ENCODE measurements at regions of chr2 and their contacts with region 1.

Region 1: GRCh38 chr2:239401067-239401880 is 454 bp upstream of the HDAC4 start:
- DNase-seq: peak; percentile 97
- H3K4me3 ChIP-seq: peak overlapping the region; percentile 72 to 99 (median 88)
- H3K27ac ChIP-seq: peak overlapping the region; percentile 99
- H3K4me1 ChIP-seq: peaks cover 14% of the 10 kb centered on the region
- H3K27me3 ChIP-seq: peaks cover 3% of the 10 kb centered on the region
- CTCF ChIP-seq: no peak

Region 2: DNA sequence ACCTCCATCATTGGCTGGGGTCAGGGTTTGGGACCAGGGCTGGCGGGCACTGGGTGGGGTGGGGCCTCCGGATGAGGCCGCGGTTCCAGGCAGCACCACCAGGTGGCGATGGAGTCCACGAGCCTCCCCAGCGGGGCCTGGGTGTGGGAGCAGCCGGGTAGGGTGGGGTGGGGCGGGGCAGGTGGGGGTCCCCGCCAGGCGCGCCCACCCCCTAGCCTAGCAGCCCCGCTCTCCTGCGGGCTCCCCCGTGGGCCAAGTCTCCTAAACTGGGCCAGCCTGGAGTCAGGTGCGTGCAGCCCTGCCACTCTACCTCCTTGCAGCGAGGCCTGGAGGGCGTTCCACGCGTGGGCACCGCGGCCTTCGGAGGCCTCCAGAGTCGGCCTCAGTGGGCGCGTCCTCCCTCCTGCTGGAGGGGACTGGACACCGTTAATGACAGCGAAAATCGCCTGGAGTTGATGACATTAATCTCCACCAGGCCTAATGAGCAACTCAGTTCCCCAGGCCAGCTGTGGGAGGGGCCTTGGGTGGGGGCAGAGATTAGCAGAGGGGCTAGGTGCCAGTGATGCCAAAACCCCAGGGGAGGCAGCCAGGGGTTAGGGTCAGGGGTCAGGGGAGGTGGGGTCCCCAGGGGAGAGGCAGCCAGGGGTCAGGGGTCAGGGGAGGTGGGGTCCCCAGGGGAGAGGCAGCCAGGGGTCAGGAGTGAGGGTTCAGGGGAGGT is 365.8 kb before region 1 on chr2:
- CTCF ChIA-PET with region 1: no interaction called
- dilution Hi-C with region 1: no loop called
- in situ Hi-C with region 1: no loop called
- intact Hi-C with region 1: loop called (anchors 10 kb)
- DNase-seq: no peak
- H3K4me3 ChIP-seq: no peak overlapping the region
- H3K27ac ChIP-seq: no peak overlapping the region
- H3K4me1 ChIP-seq: no peaks in the 10 kb centered on the region
- H3K27me3 ChIP-seq: peaks cover 9% of the 10 kb centered on the region
- CTCF ChIP-seq: peak; percentile 37 to 89

Region 3: DNA sequence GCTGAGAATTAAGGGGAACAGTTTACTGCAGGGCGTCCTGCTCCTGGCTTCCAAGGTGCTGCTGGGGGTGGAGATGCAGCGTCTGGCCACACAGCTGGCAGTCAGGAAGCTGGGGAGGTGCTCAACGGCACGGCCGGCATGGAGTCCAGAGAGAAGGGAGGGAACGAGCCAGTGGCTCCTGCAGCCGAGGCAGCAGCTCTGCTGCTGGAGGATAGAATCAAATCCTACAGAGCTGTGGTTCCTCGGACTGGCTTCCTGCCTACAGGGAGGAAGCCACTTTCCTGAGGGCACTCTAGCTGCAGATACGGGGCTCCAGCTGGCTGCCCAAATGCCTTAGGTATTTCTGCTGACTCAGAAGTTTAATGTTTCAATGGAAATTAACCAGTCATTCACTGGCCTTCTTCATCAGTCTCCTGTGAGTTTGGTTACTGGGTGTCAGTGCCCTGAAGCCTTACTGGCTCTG is 287.1 kb before region 1 on chr2:
- CTCF ChIA-PET with region 1: no interaction called
- dilution Hi-C with region 1: no loop called
- in situ Hi-C with region 1: no loop called
- intact Hi-C with region 1: loop called (anchors 10 kb)
- DNase-seq: no peak
- H3K4me3 ChIP-seq: no peak overlapping the region
- H3K27ac ChIP-seq: no peak overlapping the region
- H3K4me1 ChIP-seq: peaks cover 15% of the 10 kb centered on the region
- H3K27me3 ChIP-seq: no peaks in the 10 kb centered on the region
- CTCF ChIP-seq: no peak

Region 4: DNA sequence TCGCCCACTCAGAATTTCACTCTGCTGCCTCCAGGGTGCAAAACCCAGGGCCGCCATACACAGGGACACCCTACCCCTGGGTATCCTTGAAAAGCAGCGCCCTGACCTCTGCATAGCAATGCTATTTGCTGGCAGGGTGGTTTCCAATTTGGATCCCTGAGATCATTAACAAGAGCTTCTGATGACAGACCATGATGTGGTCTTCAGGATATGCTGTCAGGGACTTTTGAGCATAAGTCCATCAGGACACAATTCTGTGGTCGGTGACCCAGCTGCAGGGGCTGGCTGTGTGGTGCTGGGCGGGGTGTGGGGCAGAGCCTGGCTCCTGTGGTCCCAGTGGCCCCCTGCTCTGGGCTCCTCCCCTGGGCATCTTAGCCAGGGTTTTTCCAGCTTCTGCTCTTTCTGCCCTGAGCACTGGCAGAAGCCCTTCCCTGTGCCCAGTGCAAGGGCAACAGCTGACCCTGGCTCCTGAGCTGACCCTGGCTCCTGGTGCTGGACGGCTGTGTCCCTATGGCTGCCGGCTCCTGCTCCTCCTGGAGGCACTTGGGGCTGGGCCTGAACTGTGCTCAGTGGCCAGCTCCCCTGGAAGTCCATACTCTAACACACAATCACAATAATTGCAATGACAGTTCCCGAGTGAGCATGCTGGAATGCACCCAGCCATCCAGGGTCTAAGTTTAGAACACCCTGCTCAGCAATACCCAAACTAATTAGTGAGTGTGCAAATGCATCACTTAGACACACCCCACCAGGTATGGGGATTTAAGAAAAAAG is 271.9 kb before region 1 on chr2:
- CTCF ChIA-PET with region 1: no interaction called
- dilution Hi-C with region 1: no loop called
- in situ Hi-C with region 1: no loop called
- intact Hi-C with region 1: no loop called
- DNase-seq: no peak
- H3K4me3 ChIP-seq: no peak overlapping the region
- H3K27ac ChIP-seq: no peak overlapping the region
- H3K4me1 ChIP-seq: no peaks in the 10 kb centered on the region
- H3K27me3 ChIP-seq: no peaks in the 10 kb centered on the region
- CTCF ChIP-seq: no peak

Region 5: GRCh38 chr2:239199041-239199768 is 202.1 kb before region 1 on chr2:
- CTCF ChIA-PET with region 1: no interaction called
- dilution Hi-C with region 1: no loop called
- in situ Hi-C with region 1: no loop called
- intact Hi-C with region 1: no loop called
- DNase-seq: no peak
- H3K4me3 ChIP-seq: no peak overlapping the region
- H3K27ac ChIP-seq: no peak overlapping the region
- H3K4me1 ChIP-seq: no peaks in the 10 kb centered on the region
- H3K27me3 ChIP-seq: no peaks in the 10 kb centered on the region
- CTCF ChIP-seq: no peak

Region 6: DNA sequence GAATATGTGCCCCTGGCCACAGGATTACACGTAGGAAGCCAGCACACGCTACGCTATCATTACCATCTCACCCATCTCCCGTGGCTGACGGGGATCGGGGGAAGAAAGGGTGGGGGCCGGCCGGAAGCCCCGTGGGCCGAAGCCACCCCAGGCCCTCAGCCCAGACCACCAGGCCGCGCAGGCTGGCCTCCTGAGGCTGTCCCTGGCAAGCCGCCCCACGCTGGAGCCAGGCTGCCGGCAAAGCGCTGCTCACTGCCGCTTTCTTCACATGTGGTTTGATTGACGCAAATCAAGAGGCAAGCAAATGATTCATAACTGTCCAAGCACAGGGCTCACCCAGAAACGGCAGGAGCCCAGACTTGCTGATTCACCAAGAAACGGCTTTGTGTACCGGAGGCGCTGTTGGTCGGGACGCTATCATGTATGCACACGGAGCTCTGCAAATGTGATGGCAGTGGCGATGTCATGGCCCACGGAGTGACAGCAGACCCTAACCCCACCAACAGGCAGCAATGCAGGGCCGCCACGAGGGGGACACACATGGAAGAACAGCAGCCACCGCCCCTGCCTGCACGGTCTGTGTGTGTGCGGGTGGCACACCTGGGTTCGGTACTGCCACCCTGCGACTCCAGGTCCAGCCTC is 126.1 kb before region 1 on chr2:
- CTCF ChIA-PET with region 1: no interaction called
- dilution Hi-C with region 1: no loop called
- in situ Hi-C with region 1: no loop called
- intact Hi-C with region 1: loop called (anchors 5 kb)
- DNase-seq: peak; percentile 94
- H3K4me3 ChIP-seq: peak overlapping the region in 2 of 3 experiments; percentile 8 to 29
- H3K27ac ChIP-seq: peak overlapping the region; percentile 32
- H3K4me1 ChIP-seq: peaks cover 26% of the 10 kb centered on the region
- H3K27me3 ChIP-seq: no peaks in the 10 kb centered on the region
- CTCF ChIP-seq: no peak

Region 7: GRCh38 chr2:239348563-239349447 is 52.5 kb before region 1 on chr2:
- CTCF ChIA-PET with region 1: no interaction called
- dilution Hi-C with region 1: no loop called
- in situ Hi-C with region 1: no loop called
- intact Hi-C with region 1: no loop called
- DNase-seq: peak; percentile 19
- H3K4me3 ChIP-seq: no peak overlapping the region
- H3K27ac ChIP-seq: peak overlapping the region; percentile 61
- H3K4me1 ChIP-seq: peaks cover 39% of the 10 kb centered on the region
- H3K27me3 ChIP-seq: no peaks in the 10 kb centered on the region
- CTCF ChIP-seq: no peak

Region 8: GRCh38 chr2:239675826-239676715 is 274.8 kb after region 1 on chr2:
- CTCF ChIA-PET with region 1: no interaction called
- dilution Hi-C with region 1: no loop called
- in situ Hi-C with region 1: no loop called
- intact Hi-C with region 1: no loop called
- DNase-seq: no peak
- H3K4me3 ChIP-seq: no peak overlapping the region
- H3K27ac ChIP-seq: no peak overlapping the region
- H3K4me1 ChIP-seq: no peaks in the 10 kb centered on the region
- H3K27me3 ChIP-seq: no peaks in the 10 kb centered on the region
- CTCF ChIP-seq: no peak

Region 9: GRCh38 chr2:239991689-239992314 is 590.5 kb after region 1 on chr2:
- CTCF ChIA-PET with region 1: no interaction called
- dilution Hi-C with region 1: no loop called
- in situ Hi-C with region 1: no loop called
- intact Hi-C with region 1: loop called (anchors 1 kb)
- DNase-seq: peak; percentile 14
- H3K4me3 ChIP-seq: no peak overlapping the region
- H3K27ac ChIP-seq: no peak overlapping the region
- H3K4me1 ChIP-seq: no peaks in the 10 kb centered on the region
- H3K27me3 ChIP-seq: no peaks in the 10 kb centered on the region
- CTCF ChIP-seq: peak; percentile 72 to 74